ENCODE measurements at regions of chr19 and their contacts with region 1.

Region 1: DNA sequence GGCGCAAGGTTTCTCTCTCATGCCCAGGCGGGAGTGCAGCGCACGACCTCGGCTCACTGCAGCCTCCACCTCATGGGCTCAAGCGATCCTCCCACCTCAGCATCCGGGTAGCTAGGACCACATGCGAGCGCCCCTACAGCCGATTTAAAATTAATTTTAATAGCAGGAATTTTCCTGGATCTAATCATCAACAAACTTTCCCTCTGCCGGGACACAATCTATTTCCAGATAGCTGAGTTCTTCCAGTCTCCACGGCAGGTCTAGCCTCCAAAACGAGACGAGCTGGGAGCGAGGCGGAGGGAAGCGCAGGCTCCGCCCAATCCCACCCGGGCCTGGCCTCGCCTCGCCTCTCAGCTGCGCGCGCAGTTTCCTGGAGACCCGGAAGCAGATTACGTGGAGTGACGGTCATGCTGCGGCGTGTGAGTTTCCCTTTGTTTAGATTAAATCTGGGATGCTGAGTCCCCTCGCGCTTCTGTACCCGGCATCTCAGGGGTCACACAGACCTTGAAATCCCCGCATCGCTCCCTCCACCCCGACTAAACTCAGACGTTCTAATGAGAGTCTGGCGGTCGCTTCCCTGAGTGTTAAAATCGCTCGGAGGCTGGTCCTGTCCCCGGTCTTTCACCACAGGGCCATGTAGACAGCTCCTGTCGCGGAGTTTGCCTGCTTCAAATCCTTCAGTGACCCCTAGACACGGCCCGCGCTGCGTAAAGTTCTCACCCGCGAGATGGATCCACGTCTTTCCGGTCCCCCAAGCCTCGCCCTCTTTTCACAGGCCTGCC is at the start of gene ZNF880:
- DNase-seq: peak; percentile 95
- total RNA-seq, gene ZNF880: 18.3 TPM

Region 2: DNA sequence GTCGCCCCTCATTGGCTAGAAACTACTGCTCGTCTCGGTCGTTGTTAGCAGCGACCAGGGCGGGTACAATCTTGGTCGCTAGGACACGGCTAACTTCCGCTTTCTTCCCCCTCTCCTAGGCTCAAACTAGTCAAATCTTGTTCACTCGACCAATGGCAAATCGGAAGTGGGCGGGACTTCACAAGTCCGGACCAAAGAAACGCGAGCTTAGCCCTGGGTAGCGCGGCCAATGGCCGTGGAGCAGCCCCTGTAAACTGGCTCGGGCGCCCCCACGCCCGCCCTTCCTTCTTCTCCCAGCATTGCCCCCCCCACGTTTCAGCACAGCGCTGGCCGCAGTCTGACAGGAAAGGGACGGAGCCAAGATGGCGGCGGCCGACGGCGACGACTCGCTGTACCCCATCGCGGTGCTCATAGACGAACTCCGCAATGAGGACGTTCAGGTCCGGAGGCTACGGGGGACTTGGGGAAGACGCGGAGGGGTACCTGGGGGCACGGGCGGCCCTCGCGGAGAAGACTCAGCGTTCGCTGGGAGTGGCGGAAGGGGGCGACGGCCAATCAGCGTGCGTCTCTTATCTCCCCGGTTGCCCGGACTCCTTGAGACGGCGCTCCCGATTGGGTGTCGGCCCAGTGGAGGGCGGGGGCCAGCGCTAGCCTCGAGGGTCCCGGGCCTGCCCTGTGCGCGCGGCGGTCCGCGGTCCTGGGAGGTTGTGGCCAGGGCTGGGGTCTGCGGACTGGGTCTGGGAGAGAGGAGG is 179.8 kb before region 1 on chr19 and contains the start of gene PPP2R1A:
- intact Hi-C with region 1: no loop called
- DNase-seq: peak; percentile 100
- total RNA-seq, gene PPP2R1A: 466 TPM

Region 3: GRCh38 chr19:52336117-52336790 is 33.5 kb before region 1 on chr19 and contains the start of gene ZNF610:
- intact Hi-C with region 1: loop called (anchors 2 kb)
- DNase-seq: peak; percentile 93
- total RNA-seq, gene ZNF610: 2.8 TPM

Region 4: DNA sequence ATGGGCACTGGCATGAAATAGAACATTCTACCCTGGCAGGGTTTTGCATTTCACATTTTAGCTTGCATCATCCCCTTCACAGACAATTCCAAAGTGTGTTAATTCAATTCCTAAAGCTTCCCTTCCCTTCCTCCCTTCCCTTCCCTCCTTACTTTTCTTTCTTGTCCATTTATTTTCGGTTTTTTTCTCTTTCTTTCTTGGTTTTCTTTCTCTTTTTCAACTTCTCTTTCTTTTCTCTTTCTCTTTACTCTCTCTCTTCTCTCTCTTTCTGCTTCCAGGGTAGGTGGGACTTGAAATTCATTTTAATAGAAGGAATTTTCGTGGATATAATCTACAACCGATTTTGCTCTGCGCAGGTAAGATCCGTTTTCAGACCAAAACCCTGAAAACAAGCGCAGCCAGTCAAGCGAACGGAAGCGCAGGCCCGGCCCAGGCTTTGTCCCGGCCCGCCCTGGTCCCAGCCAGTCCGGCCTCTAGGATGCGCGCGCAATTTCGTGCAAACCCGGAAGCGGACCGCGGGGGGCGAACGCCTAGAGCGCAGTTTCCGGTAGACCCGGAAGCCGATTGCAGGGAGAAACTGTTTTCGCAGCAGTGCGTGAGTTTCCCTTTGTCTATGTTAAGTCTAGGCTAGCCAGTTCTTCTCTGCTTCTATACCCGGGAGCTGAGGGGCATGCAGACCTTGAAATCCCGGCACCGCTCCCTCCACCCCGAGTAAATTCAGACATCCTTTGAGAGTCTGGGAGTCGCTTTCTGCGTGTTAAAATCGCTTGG is 27.7 kb after region 1 on chr19 and contains the start of gene ZNF528:
- intact Hi-C with region 1: loop called (anchors 2 kb)
- DNase-seq: peak; percentile 98
- total RNA-seq, gene ZNF528: 21.5 TPM

Region 5: GRCh38 chr19:52444506-52444905 is 74.8 kb after region 1 on chr19:
- intact Hi-C with region 1: no loop called
- DNase-seq: no peak